Naive thymus-derived CD4-positive, alpha-beta T cell (primary cell): ENCODE measurements at regions of chr6 and their contacts with region 1.

Region 1: GRCh38 chr6:5260661-5261544 is at the starts of genes FARS2 and LYRM4:
- DNase-seq: peak; percentile 86 to 99 (median 97)
- ATAC-seq: peak; percentile 91
- H3K4me3 ChIP-seq: peak within 1 kb of the TSS; percentile 63
- H3K4me3 Mint-ChIP-seq: peak within 1 kb of the TSS; percentile 94 to 100 (median 98)
- H3K27ac ChIP-seq: peak within 1 kb of the TSS; percentile 93
- H3K27ac Mint-ChIP-seq: peak within 1 kb of the TSS; percentile 99 to 100 (median 100)
- H3K4me1 ChIP-seq: peaks cover 9 to 13% of the 10 kb centered on the region in 2 donors
- H3K4me1 Mint-ChIP-seq: peaks cover 18 to 63% (median 43%) of the 10 kb centered on the region in 7 donors
- H3K27me3 ChIP-seq: no peaks in the 10 kb centered on the region
- H3K27me3 Mint-ChIP-seq: no peaks in the 10 kb centered on the region
- total RNA-seq, gene FARS2: 16.2 to 23.1 (median 20.3) TPM
- total RNA-seq, gene LYRM4: 15.1 to 27.2 (median 22.4) TPM

Region 2: GRCh38 chr6:4775584-4776494 is 485.1 kb before region 1 on chr6 and contains the start of gene CDYL:
- CTCF ChIA-PET with region 1: no interaction called
- POLR2A ChIA-PET with region 1: no interaction called
- intact Hi-C with region 1: loop called in 1 of 2 experiments (anchors 2 kb)
- DNase-seq: peak; percentile 75 to 94 (median 88)
- ATAC-seq: peak; percentile 89
- H3K4me3 ChIP-seq: peak within 1 kb of the TSS; percentile 58
- H3K4me3 Mint-ChIP-seq: peak within 1 kb of the TSS; percentile 84 to 96 (median 93)
- H3K27ac ChIP-seq: peak within 1 kb of the TSS; percentile 63
- H3K27ac Mint-ChIP-seq: peak within 1 kb of the TSS; percentile 61 to 94 (median 87)
- H3K4me1 ChIP-seq: peaks cover 0 to 10% of the 10 kb centered on the region in 2 donors
- H3K4me1 Mint-ChIP-seq: peaks cover 32 to 48% (median 46%) of the 10 kb centered on the region in 7 donors
- H3K27me3 ChIP-seq: no peaks in the 10 kb centered on the region
- H3K27me3 Mint-ChIP-seq: peaks cover 0 to 38% (median 0%) of the 10 kb centered on the region in 5 donors
- total RNA-seq, gene CDYL: 25.5 to 43.3 (median 35.1) TPM

Region 3: DNA sequence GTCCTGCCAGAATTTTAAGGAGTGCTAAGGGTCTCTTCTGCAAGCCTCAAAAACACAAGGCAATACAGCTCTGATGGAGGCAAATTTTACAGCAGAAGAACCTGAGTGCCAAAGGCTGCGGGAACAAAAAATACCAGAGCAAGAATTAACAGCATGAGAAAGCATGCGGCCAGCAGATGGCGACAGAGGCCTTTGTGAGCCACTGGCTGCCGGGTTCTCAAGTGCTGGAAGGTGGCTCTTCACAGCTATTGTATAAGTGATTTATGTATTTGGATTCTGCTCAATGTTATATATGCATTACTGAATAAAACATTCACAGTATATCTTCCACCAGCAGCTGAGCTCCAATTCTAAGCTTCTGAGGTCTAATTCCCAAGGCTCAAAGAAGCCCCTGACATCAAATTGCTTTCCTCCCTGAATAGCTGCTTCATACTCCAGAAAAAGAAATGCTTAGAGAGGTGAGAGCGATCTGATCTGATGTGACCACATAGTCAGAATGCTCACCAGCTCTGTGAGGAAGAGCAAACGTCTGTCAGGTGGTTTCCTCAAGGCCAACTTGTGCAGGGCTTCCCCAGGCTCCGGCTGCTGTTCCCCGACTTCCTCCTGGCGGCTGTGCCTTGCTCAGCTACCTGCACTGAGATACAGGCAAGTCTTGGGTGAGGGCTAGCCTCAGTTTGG is 117.1 kb before region 1 on chr6:
- CTCF ChIA-PET with region 1: interaction called, 3 read pairs
- POLR2A ChIA-PET with region 1: interaction called, 3 read pairs
- intact Hi-C with region 1: loop called (anchors 1 kb)
- DNase-seq: peak; percentile 61 to 86 (median 73)
- ATAC-seq: peak; percentile 84
- H3K4me3 ChIP-seq: no peak overlapping the region
- H3K4me3 Mint-ChIP-seq: no peak overlapping the region
- H3K27ac ChIP-seq: no peak overlapping the region
- H3K27ac Mint-ChIP-seq: peak overlapping the region in 2 of 9 donors; percentile 18 to 25
- H3K4me1 ChIP-seq: no peaks in the 10 kb centered on the region
- H3K4me1 Mint-ChIP-seq: peaks cover 0 to 7% (median 5%) of the 10 kb centered on the region in 7 donors
- H3K27me3 ChIP-seq: no peaks in the 10 kb centered on the region
- H3K27me3 Mint-ChIP-seq: no peaks in the 10 kb centered on the region

Region 4: DNA sequence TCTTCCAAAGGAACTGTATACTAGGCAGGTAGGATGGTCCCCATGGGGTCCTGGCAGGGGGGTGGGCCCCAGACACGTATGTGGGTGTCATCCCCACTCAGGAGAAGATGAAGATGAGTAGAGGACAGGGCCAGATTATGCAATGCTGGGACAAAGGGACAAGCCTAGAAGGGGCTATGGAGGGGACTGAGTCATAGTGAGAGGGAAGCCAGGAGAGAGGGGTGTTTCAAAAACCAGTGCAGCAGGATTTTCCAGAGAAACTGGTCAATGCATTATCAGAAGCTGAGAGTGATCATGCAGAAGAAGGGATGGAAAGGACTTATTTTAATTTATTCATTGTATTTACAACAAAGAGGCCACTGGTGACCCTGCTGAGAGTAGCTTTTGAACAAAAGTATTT is 101.8 kb before region 1 on chr6:
- CTCF ChIA-PET with region 1: no interaction called
- POLR2A ChIA-PET with region 1: no interaction called
- intact Hi-C with region 1: no loop called
- DNase-seq: no peak
- ATAC-seq: no peak
- H3K4me3 ChIP-seq: no peak overlapping the region
- H3K4me3 Mint-ChIP-seq: no peak overlapping the region
- H3K27ac ChIP-seq: no peak overlapping the region
- H3K27ac Mint-ChIP-seq: peak overlapping the region in 2 of 9 donors; percentile 38 to 43
- H3K4me1 ChIP-seq: no peaks in the 10 kb centered on the region
- H3K4me1 Mint-ChIP-seq: peaks cover 0 to 2% (median 0%) of the 10 kb centered on the region in 7 donors
- H3K27me3 ChIP-seq: no peaks in the 10 kb centered on the region
- H3K27me3 Mint-ChIP-seq: no peaks in the 10 kb centered on the region

Region 5: GRCh38 chr6:5179917-5180316 is 81.0 kb before region 1 on chr6:
- CTCF ChIA-PET with region 1: interaction called, 6 read pairs
- POLR2A ChIA-PET with region 1: interaction called, 20 read pairs
- intact Hi-C with region 1: no loop called
- DNase-seq: no peak
- ATAC-seq: no peak
- H3K4me3 ChIP-seq: no peak overlapping the region
- H3K4me3 Mint-ChIP-seq: peak overlapping the region in 3 of 10 donors; percentile 2 to 17 (median 3)
- H3K27ac ChIP-seq: no peak overlapping the region
- H3K27ac Mint-ChIP-seq: peak overlapping the region in 1 of 9 donors; percentile 69
- H3K4me1 ChIP-seq: peaks cover 9 to 25% of the 10 kb centered on the region in 2 donors
- H3K4me1 Mint-ChIP-seq: peaks cover 33 to 65% (median 56%) of the 10 kb centered on the region in 7 donors
- H3K27me3 ChIP-seq: no peaks in the 10 kb centered on the region
- H3K27me3 Mint-ChIP-seq: no peaks in the 10 kb centered on the region

Region 6: DNA sequence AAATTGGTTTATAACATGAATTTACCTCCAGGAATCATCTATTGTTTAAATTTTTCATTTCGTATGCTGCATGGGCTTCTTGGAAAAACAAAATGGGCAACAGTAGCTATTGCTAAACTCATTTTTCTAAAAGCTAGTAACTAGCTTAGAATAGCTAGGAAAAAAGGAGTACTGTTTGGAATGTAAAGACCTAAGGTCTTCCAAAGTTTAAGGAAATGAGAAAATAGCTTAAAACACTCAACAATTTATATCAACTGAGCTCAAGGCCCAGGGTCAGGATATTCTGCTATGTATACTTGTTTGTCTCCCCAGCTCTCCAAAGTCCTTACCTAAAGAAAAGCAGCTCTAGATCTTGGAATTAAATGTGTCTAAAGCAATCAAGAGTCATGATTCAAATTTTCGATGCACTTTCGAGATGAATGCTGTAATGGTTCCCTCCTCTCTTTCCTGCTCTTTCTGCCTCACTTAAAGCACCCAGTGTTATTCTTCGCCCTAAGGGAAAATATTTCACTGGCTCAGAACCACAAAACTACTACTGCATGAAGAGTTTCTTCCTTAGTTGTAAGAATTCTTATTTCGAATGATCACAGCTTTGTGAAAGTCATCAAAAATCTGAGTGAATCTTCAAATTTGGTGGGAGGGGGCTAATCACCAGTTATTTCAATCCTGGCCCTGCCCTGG is 41.8 kb before region 1 on chr6:
- CTCF ChIA-PET with region 1: no interaction called
- POLR2A ChIA-PET with region 1: no interaction called
- intact Hi-C with region 1: no loop called
- DNase-seq: no peak
- ATAC-seq: no peak
- H3K4me3 ChIP-seq: no peak overlapping the region
- H3K4me3 Mint-ChIP-seq: no peak overlapping the region
- H3K27ac ChIP-seq: no peak overlapping the region
- H3K27ac Mint-ChIP-seq: no peak overlapping the region
- H3K4me1 ChIP-seq: no peaks in the 10 kb centered on the region
- H3K4me1 Mint-ChIP-seq: peaks cover 0 to 5% (median 0%) of the 10 kb centered on the region in 7 donors
- H3K27me3 ChIP-seq: no peaks in the 10 kb centered on the region
- H3K27me3 Mint-ChIP-seq: no peaks in the 10 kb centered on the region

Region 7: GRCh38 chr6:5302995-5303622 is 42.2 kb after region 1 on chr6:
- CTCF ChIA-PET with region 1: no interaction called
- POLR2A ChIA-PET with region 1: no interaction called
- intact Hi-C with region 1: loop called (anchors 1 kb)
- DNase-seq: peak; percentile 8 to 53 (median 36)
- ATAC-seq: peak; percentile 90
- H3K4me3 ChIP-seq: peak overlapping the region; percentile 10
- H3K4me3 Mint-ChIP-seq: peak overlapping the region in 5 of 10 donors; percentile 3 to 36 (median 22)
- H3K27ac ChIP-seq: no peak overlapping the region
- H3K27ac Mint-ChIP-seq: peak overlapping the region in 5 of 9 donors; percentile 3 to 48 (median 15)
- H3K4me1 ChIP-seq: peaks cover 5 to 13% of the 10 kb centered on the region in 2 donors
- H3K4me1 Mint-ChIP-seq: peaks cover 20 to 58% (median 42%) of the 10 kb centered on the region in 7 donors
- H3K27me3 ChIP-seq: no peaks in the 10 kb centered on the region
- H3K27me3 Mint-ChIP-seq: no peaks in the 10 kb centered on the region

Region 8: DNA sequence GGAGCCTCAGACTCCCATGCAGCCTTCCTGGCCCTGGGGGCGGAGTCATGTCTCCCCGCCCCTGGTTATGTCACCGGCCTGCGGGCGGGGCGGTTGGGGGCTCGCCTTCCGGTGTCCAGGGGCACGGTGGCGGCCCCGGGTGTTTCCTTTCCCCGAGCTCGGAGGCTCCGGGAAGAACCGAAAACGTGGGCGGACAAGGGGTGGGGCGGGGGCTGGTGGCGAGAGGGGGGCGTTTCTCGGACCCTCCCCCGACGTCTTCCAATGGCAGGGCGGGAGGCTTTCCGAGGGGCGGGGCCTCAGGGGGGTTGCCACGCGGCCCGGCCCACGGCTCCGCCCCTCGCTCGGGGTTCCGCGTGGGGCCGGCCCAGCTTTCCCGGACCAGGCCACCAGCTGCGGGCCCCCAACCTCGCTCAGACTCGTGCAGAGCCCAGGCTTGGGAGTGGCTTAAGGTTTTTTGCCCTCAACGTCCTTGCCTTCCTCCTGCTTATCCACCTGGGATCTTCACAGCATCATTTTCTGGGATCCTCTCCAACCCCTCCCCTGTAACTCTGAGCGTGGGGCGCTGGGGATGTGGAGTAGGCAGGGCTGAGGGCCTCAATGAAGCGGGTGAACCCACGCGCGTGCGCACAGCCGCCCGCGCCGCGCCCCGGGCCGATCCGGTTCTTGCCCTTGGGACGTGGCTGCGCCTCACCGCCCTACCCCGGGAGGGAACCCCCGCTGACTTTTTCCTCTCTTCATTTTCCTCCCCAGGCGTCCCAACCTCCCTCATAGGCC is 747.9 kb after region 1 on chr6:
- CTCF ChIA-PET with region 1: no interaction called
- POLR2A ChIA-PET with region 1: no interaction called
- intact Hi-C with region 1: loop called (anchors 1 to 2 kb)
- DNase-seq: peak in 3 of 9 donors; percentile 18 to 71 (median 23)
- ATAC-seq: peak; percentile 66
- H3K4me3 ChIP-seq: peak overlapping the region; percentile 36
- H3K4me3 Mint-ChIP-seq: peak overlapping the region; percentile 32 to 87 (median 80)
- H3K27ac ChIP-seq: no peak overlapping the region
- H3K27ac Mint-ChIP-seq: no peak overlapping the region
- H3K4me1 ChIP-seq: peaks cover 20 to 36% of the 10 kb centered on the region in 2 donors
- H3K4me1 Mint-ChIP-seq: peaks cover 27 to 52% (median 44%) of the 10 kb centered on the region in 7 donors
- H3K27me3 ChIP-seq: peaks cover 43 to 45% of the 10 kb centered on the region in 2 donors
- H3K27me3 Mint-ChIP-seq: peaks cover 68 to 82% (median 70%) of the 10 kb centered on the region in 5 donors

Region 9: DNA sequence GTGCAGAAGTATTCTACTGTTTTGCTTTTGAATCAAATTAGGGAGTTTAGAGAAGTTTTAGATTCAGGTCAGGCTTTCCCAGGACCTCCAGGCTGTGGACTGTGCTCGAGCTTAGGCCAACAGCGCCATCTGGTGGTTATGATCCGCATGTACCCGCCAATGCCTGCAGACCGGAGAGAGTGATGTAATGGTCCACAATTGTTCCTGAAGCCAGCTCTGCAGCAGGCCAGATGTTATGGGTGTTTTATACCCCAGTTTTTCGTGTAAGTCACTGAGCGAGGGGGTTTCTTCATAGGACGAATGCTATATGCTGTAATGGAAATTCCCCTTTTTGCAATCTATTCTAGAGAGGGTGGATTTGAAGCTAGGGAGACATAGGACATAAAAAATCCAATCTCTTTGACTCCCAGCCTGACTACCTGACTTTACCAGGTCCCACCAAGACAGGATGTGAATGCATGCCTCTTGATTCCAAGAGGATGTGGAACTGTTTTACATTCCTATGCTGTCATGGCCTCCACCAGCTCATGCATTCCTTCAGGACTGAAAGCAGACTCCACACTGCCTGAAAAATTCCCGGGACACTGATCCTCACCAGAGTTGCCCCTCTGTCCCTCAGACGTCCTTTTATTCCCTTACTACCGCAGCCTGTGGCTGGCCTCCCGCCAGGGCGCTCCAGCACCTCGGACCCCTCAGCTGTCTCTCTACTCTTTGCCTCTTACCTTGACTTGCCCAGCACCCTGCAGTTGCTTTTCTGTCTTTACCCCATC is 1286.4 kb after region 1 on chr6:
- CTCF ChIA-PET with region 1: no interaction called
- POLR2A ChIA-PET with region 1: no interaction called
- intact Hi-C with region 1: no loop called
- DNase-seq: peak; percentile 62 to 88 (median 77)
- ATAC-seq: peak; percentile 95
- H3K4me3 ChIP-seq: peak overlapping the region; percentile 59
- H3K4me3 Mint-ChIP-seq: peak overlapping the region; percentile 75 to 88 (median 81)
- H3K27ac ChIP-seq: no peak overlapping the region
- H3K27ac Mint-ChIP-seq: peak overlapping the region in 2 of 9 donors; percentile 17 to 33
- H3K4me1 ChIP-seq: peaks cover 0 to 13% of the 10 kb centered on the region in 2 donors
- H3K4me1 Mint-ChIP-seq: peaks cover 0 to 9% (median 4%) of the 10 kb centered on the region in 7 donors
- H3K27me3 ChIP-seq: peaks cover 0 to 16% of the 10 kb centered on the region in 2 donors
- H3K27me3 Mint-ChIP-seq: peaks cover 35 to 78% (median 50%) of the 10 kb centered on the region in 5 donors